ENCODE measurements at regions of chr1 and their contacts with region 1.

Region 1: GRCh38 chr1:24321697-24322469 is 2.7 kb downstream of the GRHL3 start:
- H3K4me3 Mint-ChIP-seq: peak overlapping the region; percentile 76
- H3K27ac Mint-ChIP-seq: peak overlapping the region; percentile 71
- H3K4me1 Mint-ChIP-seq: peaks cover 33% of the 10 kb centered on the region
- H3K27me3 Mint-ChIP-seq: peaks cover 95% of the 10 kb centered on the region

Region 2: DNA sequence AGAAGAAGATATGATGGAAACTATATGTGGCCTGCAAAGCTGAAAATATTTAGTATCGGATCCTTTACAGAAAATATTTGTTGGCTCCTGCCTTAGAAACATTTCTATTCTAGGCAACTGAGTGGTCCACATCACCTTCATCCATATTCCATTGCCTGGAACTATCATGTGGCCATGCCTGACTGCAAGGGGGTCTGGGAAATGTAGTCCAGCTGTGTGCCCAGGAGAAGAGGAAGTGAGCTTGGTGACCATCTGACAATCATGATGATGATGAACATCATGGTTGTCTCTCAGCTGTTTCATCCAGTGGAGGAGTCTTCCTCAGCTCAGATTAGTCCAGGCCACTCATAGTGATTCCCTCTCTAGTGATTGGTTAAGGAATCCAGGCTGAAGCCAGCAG is 73.0 kb before region 1 on chr1:
- intact Hi-C with region 1: no loop called
- H3K4me3 Mint-ChIP-seq: no peak overlapping the region
- H3K27ac Mint-ChIP-seq: no peak overlapping the region
- H3K4me1 Mint-ChIP-seq: peaks cover 8% of the 10 kb centered on the region
- H3K27me3 Mint-ChIP-seq: no peaks in the 10 kb centered on the region

Region 3: GRCh38 chr1:24266398-24266941 is 55.4 kb before region 1 on chr1:
- intact Hi-C with region 1: no loop called
- H3K4me3 Mint-ChIP-seq: no peak overlapping the region
- H3K27ac Mint-ChIP-seq: no peak overlapping the region
- H3K4me1 Mint-ChIP-seq: no peaks in the 10 kb centered on the region
- H3K27me3 Mint-ChIP-seq: peaks cover 18% of the 10 kb centered on the region

Region 4: GRCh38 chr1:24277420-24278169 is 44.3 kb before region 1 on chr1:
- intact Hi-C with region 1: no loop called
- H3K4me3 Mint-ChIP-seq: no peak overlapping the region
- H3K27ac Mint-ChIP-seq: no peak overlapping the region
- H3K4me1 Mint-ChIP-seq: no peaks in the 10 kb centered on the region
- H3K27me3 Mint-ChIP-seq: peaks cover 21% of the 10 kb centered on the region

Region 5: DNA sequence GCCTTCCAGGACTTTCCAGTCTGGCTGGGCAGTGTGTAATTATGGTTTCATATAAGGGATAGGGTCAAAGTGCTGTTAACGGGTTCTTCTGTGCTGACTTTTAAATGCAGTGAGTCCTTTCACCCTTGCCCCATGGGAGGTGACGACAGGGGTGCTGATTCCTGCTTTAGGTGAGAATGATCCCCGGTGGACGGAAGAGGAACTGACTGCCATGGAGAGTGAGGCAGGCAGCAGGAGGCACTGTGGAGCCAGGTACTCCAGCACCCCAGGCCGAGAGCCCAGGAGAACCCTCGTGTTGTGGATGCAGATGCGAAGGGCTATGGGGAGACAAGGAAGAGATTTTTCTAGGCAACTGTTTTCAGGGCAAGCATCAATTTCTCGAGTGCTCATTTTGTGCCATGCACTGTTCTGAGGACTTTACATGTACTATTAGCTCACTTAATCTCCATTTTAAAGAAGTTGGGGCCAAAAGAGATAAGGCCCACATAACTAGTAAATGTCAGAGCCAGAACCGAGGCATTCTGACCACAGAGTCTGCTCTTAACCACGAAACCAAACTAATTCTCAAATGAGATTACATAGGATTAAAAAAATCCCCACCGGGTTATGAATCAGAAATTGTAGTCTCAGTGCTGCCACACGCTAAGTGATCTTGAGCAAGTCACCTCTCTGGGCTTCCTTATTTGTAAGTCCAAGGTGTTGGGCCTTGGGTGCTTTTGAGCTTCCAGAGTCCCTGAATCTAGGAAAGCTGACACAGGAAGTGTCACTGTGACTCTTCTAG is 63.5 kb after region 1 on chr1:
- intact Hi-C with region 1: loop called (anchors 5 kb)
- H3K4me3 Mint-ChIP-seq: no peak overlapping the region
- H3K27ac Mint-ChIP-seq: peak overlapping the region; percentile 76
- H3K4me1 Mint-ChIP-seq: peaks cover 22% of the 10 kb centered on the region
- H3K27me3 Mint-ChIP-seq: no peaks in the 10 kb centered on the region

Region 6: DNA sequence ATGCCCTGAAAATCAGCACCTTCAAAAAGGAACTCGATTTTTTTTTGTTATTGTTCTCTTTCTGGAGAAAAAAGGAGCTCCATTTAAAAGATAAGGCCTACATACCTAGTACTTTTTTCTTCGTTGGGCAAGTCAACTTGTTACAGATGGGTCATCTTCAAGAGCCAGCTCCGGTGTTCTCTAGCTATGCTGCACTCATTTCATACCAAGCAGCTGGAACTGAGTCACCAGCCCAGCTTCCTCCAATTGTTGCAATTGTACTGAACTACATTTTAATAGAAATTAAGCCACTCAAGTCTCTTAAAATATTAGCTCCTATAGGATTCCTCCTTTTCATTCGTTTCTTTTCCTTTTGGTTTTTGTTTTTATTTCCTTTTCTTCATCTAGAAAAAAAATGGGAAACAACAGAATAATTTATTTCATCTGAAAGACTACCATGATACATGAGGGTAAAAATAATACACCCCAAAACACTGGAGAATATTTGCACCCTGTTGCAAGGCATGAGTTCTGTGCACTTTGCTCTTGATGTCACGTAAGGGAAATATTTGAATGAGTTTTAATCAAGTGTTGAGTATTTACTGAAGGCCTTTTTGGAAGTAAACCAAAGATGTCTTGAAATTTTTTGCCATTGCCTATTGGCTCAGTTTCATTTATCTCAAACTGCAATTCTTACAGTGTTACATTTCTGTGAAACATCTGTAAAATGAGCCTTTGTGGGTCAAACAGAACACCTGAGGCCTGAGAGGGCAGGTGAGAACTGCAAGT is 483.8 kb after region 1 on chr1:
- intact Hi-C with region 1: no loop called
- H3K4me3 Mint-ChIP-seq: no peak overlapping the region
- H3K27ac Mint-ChIP-seq: no peak overlapping the region
- H3K4me1 Mint-ChIP-seq: peaks cover 35% of the 10 kb centered on the region
- H3K27me3 Mint-ChIP-seq: no peaks in the 10 kb centered on the region